Caco-2 (cell line): ENCODE measurements at regions of chr13 and their contacts with region 1.

Region 1: GRCh38 chr13:43786773-43787517 is at the start of gene ENOX1:
- DNase-seq: peak; percentile 82 to 84
- H3K4me3 ChIP-seq: peak within 1 kb of the TSS; percentile 84
- H3K4me3 Mint-ChIP-seq: peak within 1 kb of the TSS; percentile 93
- H3K27ac Mint-ChIP-seq: peak within 1 kb of the TSS; percentile 88
- H3K4me1 ChIP-seq: peaks cover 7% of the 10 kb centered on the region; the same call in 1 of the 2 replicates
- H3K4me1 Mint-ChIP-seq: peaks cover 15% of the 10 kb centered on the region
- H3K27me3 ChIP-seq: no peaks in the 10 kb centered on the region
- H3K27me3 Mint-ChIP-seq: no peaks in the 10 kb centered on the region
- CTCF ChIP-seq: peak in 1 of 2 experiments; percentile 22
- total RNA-seq, gene ENOX1: 9.1 and 10.4 TPM in 2 replicates

Region 2: DNA sequence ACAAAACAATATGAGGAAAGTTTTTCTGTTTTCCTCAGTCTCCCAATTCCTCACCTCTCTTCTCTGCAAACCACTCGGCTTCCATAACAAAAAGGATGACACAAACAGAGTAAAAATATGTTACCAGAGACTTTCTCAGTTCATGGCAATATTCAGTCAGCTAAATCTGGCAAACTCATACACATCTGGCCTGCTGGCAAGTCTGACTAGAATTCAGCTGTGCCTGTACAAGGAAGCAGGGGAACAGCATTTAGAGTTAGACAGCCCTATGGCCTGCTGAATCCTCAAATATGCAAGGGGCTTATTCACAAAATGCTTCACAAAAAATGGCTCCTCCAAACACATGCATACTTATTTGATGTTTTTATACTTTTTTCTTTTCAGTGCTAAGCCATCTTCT is 228.0 kb before region 1 on chr13:
- CTCF ChIA-PET with region 1: no interaction called
- POLR2A ChIA-PET with region 1: no interaction called
- intact Hi-C with region 1: loop called (anchors 10 kb)
- DNase-seq: no peak
- H3K4me3 ChIP-seq: no peak overlapping the region
- H3K4me3 Mint-ChIP-seq: no peak overlapping the region
- H3K27ac Mint-ChIP-seq: no peak overlapping the region
- H3K4me1 ChIP-seq: peaks cover 5% of the 10 kb centered on the region
- H3K4me1 Mint-ChIP-seq: peaks cover 7% of the 10 kb centered on the region
- H3K27me3 ChIP-seq: no peaks in the 10 kb centered on the region
- H3K27me3 Mint-ChIP-seq: no peaks in the 10 kb centered on the region
- CTCF ChIP-seq: no peak

Region 3: GRCh38 chr13:43572656-43573367 is 214.1 kb before region 1 on chr13:
- CTCF ChIA-PET with region 1: no interaction called
- POLR2A ChIA-PET with region 1: no interaction called
- intact Hi-C with region 1: loop called (anchors 5 kb)
- DNase-seq: peak in 1 of 2 experiments; percentile 19
- H3K4me3 ChIP-seq: no peak overlapping the region
- H3K4me3 Mint-ChIP-seq: peak overlapping the region; percentile 49
- H3K27ac Mint-ChIP-seq: peak overlapping the region; percentile 87
- H3K4me1 ChIP-seq: peaks cover 63% of the 10 kb centered on the region
- H3K4me1 Mint-ChIP-seq: peaks cover 51% of the 10 kb centered on the region
- H3K27me3 ChIP-seq: no peaks in the 10 kb centered on the region
- H3K27me3 Mint-ChIP-seq: no peaks in the 10 kb centered on the region
- CTCF ChIP-seq: no peak

Region 4: DNA sequence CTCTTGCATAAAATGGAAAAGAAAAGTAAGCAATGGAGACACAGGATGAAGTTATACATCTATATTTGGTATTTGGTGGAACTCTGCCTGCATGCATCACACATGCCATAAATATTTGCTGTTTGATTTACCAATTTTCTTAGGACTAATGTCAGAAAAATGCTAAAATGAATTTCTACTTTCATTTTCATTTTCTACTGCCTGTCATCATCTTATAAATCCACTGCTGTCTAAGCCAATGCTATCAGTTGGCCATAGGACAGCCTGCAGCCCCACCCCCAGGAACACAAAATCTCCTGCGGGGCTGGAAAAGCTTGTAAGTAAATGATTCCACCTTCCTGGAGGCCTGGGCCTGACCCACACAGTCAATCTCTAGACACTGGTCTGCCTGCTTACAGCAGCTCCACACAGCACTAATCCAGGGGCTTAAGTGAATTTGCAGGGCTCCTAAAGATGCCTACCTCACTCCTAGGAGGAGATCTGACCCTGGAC is 122.2 kb before region 1 on chr13:
- CTCF ChIA-PET with region 1: no interaction called
- POLR2A ChIA-PET with region 1: no interaction called
- intact Hi-C with region 1: loop called (anchors 1 kb)
- DNase-seq: peak; percentile 65 to 72
- H3K4me3 ChIP-seq: no peak overlapping the region
- H3K4me3 Mint-ChIP-seq: no peak overlapping the region
- H3K27ac Mint-ChIP-seq: no peak overlapping the region
- H3K4me1 ChIP-seq: peaks cover 61% of the 10 kb centered on the region
- H3K4me1 Mint-ChIP-seq: peaks cover 38% of the 10 kb centered on the region
- H3K27me3 ChIP-seq: no peaks in the 10 kb centered on the region
- H3K27me3 Mint-ChIP-seq: no peaks in the 10 kb centered on the region
- CTCF ChIP-seq: no peak

Region 5: GRCh38 chr13:43769529-43769928 is 17.4 kb before region 1 on chr13:
- CTCF ChIA-PET with region 1: interaction called, 3 read pairs
- POLR2A ChIA-PET with region 1: no interaction called
- intact Hi-C with region 1: loop called (anchors 2 kb)
- DNase-seq: no peak
- H3K4me3 ChIP-seq: no peak overlapping the region
- H3K4me3 Mint-ChIP-seq: no peak overlapping the region
- H3K27ac Mint-ChIP-seq: no peak overlapping the region
- H3K4me1 ChIP-seq: peaks cover 26% of the 10 kb centered on the region
- H3K4me1 Mint-ChIP-seq: peaks cover 10% of the 10 kb centered on the region
- H3K27me3 ChIP-seq: no peaks in the 10 kb centered on the region
- H3K27me3 Mint-ChIP-seq: no peaks in the 10 kb centered on the region
- CTCF ChIP-seq: no peak

Region 6: DNA sequence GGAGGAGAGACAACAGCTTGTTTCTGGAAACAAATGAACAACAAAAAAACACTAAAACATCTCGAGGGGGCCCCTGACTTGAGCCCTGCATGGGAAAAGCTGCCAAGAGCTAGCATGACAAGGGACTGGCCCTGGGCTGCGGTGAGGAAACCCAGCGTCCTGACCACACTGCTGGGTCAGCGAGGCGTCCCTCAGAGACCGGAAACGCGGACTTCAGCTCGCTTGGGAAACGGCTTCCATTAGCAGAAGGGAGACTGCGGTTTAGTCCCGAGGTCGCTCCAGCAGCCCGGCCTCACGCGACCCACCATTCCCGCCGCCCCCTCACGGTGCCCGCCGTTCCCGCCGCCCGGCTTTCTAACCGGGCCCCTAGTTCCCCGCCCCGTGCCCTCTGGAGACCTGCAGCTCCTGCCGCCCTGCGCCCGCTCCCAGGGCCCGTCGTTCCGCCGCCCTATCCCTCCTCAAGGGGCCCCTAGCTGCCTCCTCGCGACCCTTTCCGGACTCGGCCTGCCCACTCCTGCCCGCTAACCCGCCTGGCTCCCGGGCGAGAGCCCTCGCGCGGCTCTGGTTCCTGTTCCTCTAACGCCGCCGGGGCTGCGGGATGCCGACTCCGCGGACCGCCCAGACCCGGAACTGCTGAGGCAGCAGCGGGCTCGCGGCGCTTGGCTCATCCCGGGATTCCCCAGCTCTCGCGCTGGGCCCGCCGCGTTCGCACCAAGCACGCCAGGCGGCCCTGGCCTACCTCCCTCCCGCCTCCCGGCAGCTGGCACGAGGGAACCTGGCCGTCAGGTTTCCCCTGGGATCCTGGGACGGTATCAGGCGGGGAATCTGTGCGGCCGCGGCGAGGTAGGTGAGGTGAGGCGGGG is 92.2 kb after region 1 on chr13 and contains the start of gene CCDC122:
- CTCF ChIA-PET with region 1: interaction called, 3 read pairs
- POLR2A ChIA-PET with region 1: interaction called, 7 read pairs
- intact Hi-C with region 1: loop called (anchors 5 kb)
- DNase-seq: peak; percentile 83 to 90
- H3K4me3 ChIP-seq: peak within 1 kb of the TSS; percentile 88
- H3K4me3 Mint-ChIP-seq: peak within 1 kb of the TSS; percentile 96
- H3K27ac Mint-ChIP-seq: peak within 1 kb of the TSS; percentile 92
- H3K4me1 ChIP-seq: 0 out of 2 replicates have a peak, but pooled peaks cover 5% of the 10 kb centered on the region
- H3K4me1 Mint-ChIP-seq: peaks cover 13% of the 10 kb centered on the region
- H3K27me3 ChIP-seq: no peaks in the 10 kb centered on the region
- H3K27me3 Mint-ChIP-seq: no peaks in the 10 kb centered on the region
- CTCF ChIP-seq: no peak
- total RNA-seq, gene CCDC122: 15.6 and 21.2 TPM in 2 replicates